Motor neuron (in vitro differentiated cells): ENCODE measurements at regions of chr6 and their contacts with region 1.

Region 1: DNA sequence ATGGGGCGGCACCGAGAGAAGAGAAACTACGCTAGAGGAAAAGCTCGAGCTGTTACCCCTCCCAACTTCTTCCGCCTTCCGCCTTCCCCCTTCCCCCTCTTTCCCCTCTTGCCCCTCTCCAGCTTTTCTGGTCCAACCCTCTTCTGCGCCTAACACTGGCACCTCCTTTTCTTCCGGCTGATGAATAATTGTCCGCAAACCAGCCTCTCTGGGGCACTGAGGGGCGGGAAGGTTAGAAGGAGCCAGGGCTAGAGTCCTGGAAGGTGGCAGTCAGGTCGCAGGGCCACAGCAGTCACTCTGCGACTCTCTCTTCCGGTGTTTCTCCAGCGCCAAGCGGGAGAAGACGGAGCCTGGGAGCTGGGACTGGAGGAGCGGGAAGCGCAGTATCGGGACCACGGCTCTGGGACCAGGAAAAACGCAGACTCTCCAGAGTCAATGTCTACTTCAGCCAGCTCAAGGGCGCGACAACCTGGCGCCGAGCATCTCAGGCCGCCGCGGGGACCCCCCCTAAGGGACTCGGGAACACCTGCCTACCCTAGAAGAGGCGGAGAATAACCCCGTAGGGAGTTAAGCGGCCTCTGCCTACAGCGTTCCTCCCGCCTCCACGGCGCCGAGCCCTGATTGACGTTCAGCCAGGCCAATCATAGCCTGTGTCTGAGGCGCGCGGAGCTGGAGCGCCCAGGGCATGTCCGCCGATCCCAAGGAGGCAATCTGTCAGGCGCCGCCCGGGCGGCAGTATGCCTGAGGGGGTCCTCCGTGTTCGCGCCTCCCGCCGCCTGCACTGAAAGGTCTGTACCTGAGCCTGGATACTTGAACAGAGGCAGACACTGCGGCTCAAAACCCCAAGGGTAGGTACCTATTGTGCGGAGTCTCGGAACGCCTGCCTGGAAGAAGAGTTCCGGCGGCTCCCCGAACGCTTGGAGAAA is 40.4 kb downstream of the PSMB9 start:
- ATAC-seq: peak; percentile 97 to 99 (median 99)
- H3K4me3 ChIP-seq: peak overlapping the region; percentile 57 to 99 (median 69)
- H3K27ac ChIP-seq: peak overlapping the region; percentile 10 to 47
- H3K4me1 ChIP-seq: peaks cover 8% of the 10 kb centered on the region in 2 donors

Region 2: DNA sequence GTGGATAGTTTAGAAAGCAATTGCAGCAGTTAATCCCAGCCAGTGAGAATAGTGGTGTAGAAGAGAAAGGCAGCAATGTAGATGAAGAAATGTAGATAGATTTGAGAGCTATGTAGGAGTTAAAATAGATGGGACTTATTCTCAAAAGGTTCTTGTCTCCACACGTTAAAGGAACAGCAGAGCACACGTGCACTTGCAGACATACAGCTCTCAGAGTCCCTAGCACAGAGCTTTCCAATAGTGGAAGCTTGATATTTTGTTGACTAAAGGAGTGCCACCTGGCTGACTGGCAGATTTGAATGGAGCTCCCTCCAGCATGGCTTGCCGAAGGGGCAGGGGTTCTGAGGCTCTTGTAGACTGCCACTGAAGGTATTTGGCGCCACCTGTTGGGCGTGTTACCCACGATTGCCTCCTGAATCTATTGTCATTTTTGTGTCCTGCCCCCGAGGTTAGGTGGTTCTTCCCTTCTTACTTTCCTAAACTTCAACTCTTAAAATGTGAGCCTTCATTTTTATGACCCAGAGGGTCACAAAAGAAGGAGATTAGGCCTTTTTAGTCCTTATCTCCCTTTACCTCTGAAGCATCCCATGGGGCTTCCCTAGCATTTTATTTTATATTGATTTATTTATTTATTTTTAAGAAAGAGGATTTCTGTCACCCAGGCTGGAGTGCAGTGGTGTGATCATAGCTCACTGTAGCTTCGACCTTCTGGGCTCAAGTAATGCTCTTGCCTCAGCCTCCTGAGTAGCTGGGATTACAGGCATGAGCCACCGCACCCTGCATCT is 90.5 kb after region 1 on chr6:
- in situ Hi-C with region 1: loop called in 4 of 9 experiments (anchors 25 kb)
- ATAC-seq: peak; percentile 46 to 80 (median 72)
- H3K4me3 ChIP-seq: no peak overlapping the region
- H3K27ac ChIP-seq: no peak overlapping the region
- H3K4me1 ChIP-seq: no peaks in the 10 kb centered on the region